ENCODE measurements at regions of chr20 and their contacts with region 1.

Region 1: DNA sequence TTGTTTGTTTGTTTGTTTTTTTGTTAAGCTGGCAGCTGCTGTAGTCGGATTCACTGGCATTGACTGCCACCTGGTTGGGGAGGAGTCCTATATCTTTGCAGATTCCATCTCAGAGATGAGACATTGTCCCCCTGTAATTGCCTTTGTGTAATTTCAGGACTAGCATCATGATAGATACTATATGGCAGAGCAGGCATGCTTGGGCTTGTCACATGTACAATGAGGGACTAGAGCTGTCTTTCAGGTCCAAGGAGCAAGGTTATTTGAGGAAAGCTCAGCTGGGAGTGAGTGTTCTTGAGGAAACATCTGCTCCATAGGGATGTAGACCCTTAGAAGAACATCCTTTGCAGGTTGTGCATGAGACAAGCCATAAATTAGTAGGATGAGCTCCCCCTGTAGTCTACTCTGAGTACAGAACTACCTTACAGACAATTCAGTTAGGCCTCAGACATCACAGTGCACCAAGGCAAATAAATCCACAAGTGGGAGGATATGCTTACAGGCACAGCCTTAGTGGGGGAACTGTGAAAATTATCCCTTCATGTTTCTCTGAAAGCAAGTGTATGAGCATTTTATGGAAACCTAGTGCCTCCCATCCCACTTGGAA is 62.1 kb downstream of the BMP2 start:
- DNase-seq: no peak
- H3K4me3 ChIP-seq: no peak overlapping the region
- H3K27ac ChIP-seq: no peak overlapping the region
- H3K4me1 ChIP-seq: no peaks in the 10 kb centered on the region
- H3K27me3 ChIP-seq: no peaks in the 10 kb centered on the region
- CTCF ChIP-seq: no peak
- EP300 ChIP-seq: no peak
- POLR2A ChIP-seq: no peak

Region 2: GRCh38 chr20:6920991-6921613 is 91.5 kb after region 1 on chr20:
- intact Hi-C with region 1: no loop called
- DNase-seq: no peak
- H3K4me3 ChIP-seq: no peak overlapping the region
- H3K27ac ChIP-seq: no peak overlapping the region
- H3K4me1 ChIP-seq: no peaks in the 10 kb centered on the region
- H3K27me3 ChIP-seq: no peaks in the 10 kb centered on the region
- CTCF ChIP-seq: no peak
- EP300 ChIP-seq: no peak
- POLR2A ChIP-seq: no peak

Region 3: GRCh38 chr20:7859356-7859802 is 1029.8 kb after region 1 on chr20:
- intact Hi-C with region 1: loop called (anchors 5 kb)
- DNase-seq: no peak
- H3K4me3 ChIP-seq: no peak overlapping the region
- H3K27ac ChIP-seq: no peak overlapping the region
- H3K4me1 ChIP-seq: peaks cover 0 to 4% (median 0%) of the 10 kb centered on the region in 4 donors
- H3K27me3 ChIP-seq: no peaks in the 10 kb centered on the region
- CTCF ChIP-seq: peak; percentile 53 to 61 (median 56)
- EP300 ChIP-seq: no peak
- POLR2A ChIP-seq: no peak

Measured in sigmoid colon (tissue), 7 donors.